Ovary (tissue), 10 donors: ENCODE measurements at regions of chr16 and their contacts with region 1.

Region 1: GRCh38 chr16:71412270-71413160 is 29.3 kb downstream of the TLE7 start:
- DNase-seq: peak; percentile 45 to 71 (median 62)
- H3K4me3 ChIP-seq: no peak overlapping the region
- H3K27ac ChIP-seq: no peak overlapping the region
- H3K4me1 ChIP-seq: peaks cover 3% of the 10 kb centered on the region
- H3K27me3 ChIP-seq: no peaks in the 10 kb centered on the region
- CTCF ChIP-seq: peak; percentile 63 to 85 (median 65)
- EP300 ChIP-seq: no peak
- POLR2A ChIP-seq: no peak

Region 2: DNA sequence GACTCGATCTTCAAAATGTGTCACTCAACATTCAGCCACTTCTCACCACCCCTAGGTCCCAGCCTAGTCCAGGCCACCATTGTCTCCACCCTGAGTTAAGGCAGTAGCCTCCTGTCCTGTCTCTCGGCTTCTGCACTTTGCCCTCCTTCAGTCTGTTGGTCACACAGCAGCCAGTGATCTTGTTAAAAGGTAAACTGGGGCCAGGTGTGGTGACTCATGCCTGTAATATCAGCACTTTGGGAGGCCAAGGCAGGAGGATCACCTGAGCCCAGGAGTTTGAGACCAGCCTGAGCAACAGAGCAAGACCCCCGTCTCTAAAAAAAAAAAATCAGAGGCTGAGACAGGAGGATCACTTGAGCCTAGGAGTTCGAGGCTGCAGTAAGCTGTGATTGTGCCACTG is 1624.6 kb before region 1 on chr16:
- intact Hi-C with region 1: no loop called
- DNase-seq: no peak
- H3K4me3 ChIP-seq: no peak overlapping the region
- H3K27ac ChIP-seq: no peak overlapping the region
- H3K4me1 ChIP-seq: no peaks in the 10 kb centered on the region
- H3K27me3 ChIP-seq: no peaks in the 10 kb centered on the region
- CTCF ChIP-seq: no peak
- EP300 ChIP-seq: no peak
- POLR2A ChIP-seq: no peak

Region 3: GRCh38 chr16:70364399-70364798 is 1048.1 kb before region 1 on chr16:
- intact Hi-C with region 1: no loop called
- DNase-seq: no peak
- H3K4me3 ChIP-seq: no peak overlapping the region
- H3K27ac ChIP-seq: no peak overlapping the region
- H3K4me1 ChIP-seq: no peaks in the 10 kb centered on the region
- H3K27me3 ChIP-seq: no peaks in the 10 kb centered on the region
- CTCF ChIP-seq: no peak
- EP300 ChIP-seq: no peak
- POLR2A ChIP-seq: no peak

Region 4: GRCh38 chr16:71351558-71351901 is 61.0 kb before region 1 on chr16:
- intact Hi-C with region 1: no loop called
- DNase-seq: no peak
- H3K4me3 ChIP-seq: no peak overlapping the region
- H3K27ac ChIP-seq: no peak overlapping the region
- H3K4me1 ChIP-seq: no peaks in the 10 kb centered on the region
- H3K27me3 ChIP-seq: no peaks in the 10 kb centered on the region
- CTCF ChIP-seq: no peak
- EP300 ChIP-seq: no peak
- POLR2A ChIP-seq: no peak

Region 5: GRCh38 chr16:71499775-71500364 is 87.4 kb after region 1 on chr16:
- intact Hi-C with region 1: loop called in 3 of 4 experiments (anchors 2 to 5 kb)
- DNase-seq: peak in 1 of 5 donors; percentile 31
- H3K4me3 ChIP-seq: no peak overlapping the region
- H3K27ac ChIP-seq: no peak overlapping the region
- H3K4me1 ChIP-seq: no peaks in the 10 kb centered on the region
- H3K27me3 ChIP-seq: no peaks in the 10 kb centered on the region
- CTCF ChIP-seq: peak in 2 of 3 donors; percentile 42 to 45
- EP300 ChIP-seq: no peak
- POLR2A ChIP-seq: no peak

Region 6: GRCh38 chr16:71537643-71538042 is 125.1 kb after region 1 on chr16:
- intact Hi-C with region 1: no loop called
- DNase-seq: no peak
- H3K4me3 ChIP-seq: no peak overlapping the region
- H3K27ac ChIP-seq: no peak overlapping the region
- H3K4me1 ChIP-seq: no peaks in the 10 kb centered on the region
- H3K27me3 ChIP-seq: no peaks in the 10 kb centered on the region
- CTCF ChIP-seq: no peak
- EP300 ChIP-seq: no peak
- POLR2A ChIP-seq: no peak

Region 7: GRCh38 chr16:71610936-71611871 is 198.7 kb after region 1 on chr16:
- intact Hi-C with region 1: loop called in 2 of 4 experiments (anchors 10 kb)
- DNase-seq: peak; percentile 33 to 78 (median 56)
- H3K4me3 ChIP-seq: no peak overlapping the region
- H3K27ac ChIP-seq: no peak overlapping the region
- H3K4me1 ChIP-seq: no peaks in the 10 kb centered on the region
- H3K27me3 ChIP-seq: no peaks in the 10 kb centered on the region
- CTCF ChIP-seq: peak; percentile 12 to 43 (median 20)
- EP300 ChIP-seq: no peak
- POLR2A ChIP-seq: no peak